ENCODE measurements at regions of chr1 and their contacts with region 1.

Region 1: DNA sequence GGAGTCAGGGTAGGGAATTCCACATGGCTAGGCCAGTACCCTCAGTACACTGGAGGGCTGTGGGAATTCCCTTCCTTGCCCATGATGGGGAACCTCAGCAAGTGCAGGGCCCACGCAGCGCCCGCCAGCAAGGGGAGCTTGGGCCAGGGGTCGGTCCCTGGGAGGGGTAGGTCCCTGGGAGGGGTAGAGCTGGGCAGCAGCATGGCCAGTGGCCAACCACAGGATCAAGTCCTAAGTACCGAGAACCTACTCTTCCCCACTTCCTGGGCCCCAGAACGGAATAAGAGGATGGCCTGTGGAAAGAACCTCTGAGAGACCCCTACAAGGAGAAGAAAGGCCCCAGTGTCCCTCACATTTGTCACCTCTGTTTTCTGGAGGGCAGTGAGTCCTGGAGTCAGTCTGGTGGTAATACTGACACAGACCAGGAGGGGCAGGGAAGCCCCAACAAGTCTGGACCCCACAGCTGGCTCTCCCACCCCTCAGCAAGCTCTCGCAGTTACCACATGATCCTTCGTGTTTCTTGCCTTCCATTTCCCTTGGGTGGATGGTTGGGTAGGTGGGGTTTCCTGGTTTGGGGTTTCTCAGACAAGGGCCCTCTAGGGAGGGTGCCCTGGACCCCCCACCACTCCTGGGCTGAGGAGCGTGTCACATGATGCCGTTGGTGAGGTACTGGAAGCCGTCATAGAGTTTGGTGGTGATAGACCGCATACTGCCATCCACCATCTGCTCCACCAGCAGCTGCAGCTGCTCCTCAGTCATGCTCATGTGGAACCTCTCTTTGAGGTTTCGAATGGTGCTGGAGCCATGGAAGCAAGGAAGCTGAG is 10.3 kb downstream of the ZNF687 start:
- DNase-seq: no peak
- H3K4me3 ChIP-seq: no peak overlapping the region
- H3K27ac ChIP-seq: no peak overlapping the region
- H3K4me1 ChIP-seq: no peaks in the 10 kb centered on the region
- H3K27me3 ChIP-seq: no peaks in the 10 kb centered on the region
- CTCF ChIP-seq: no peak
- EP300 ChIP-seq: no peak
- POLR2A ChIP-seq: no peak

Region 2: DNA sequence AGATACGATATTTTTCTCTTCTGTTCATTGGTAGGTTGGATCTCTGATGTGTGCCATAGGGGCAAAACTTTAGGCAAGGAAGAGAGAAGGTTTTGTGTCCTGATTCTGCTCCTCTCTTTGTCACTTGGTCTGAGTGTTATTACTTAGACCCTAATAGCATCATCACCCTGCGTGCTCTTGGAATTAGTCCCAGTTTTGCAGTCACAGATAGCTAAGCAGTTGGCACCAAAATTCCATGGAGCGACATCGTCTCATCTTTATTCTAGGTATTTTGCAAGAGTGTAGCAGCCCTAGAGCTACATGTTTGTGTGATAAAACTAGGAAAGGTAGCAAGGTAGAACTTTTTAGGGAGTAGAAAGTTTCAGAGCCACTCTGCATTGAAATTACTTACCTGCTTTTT is 70.3 kb before region 1 on chr1:
- intact Hi-C with region 1: no loop called
- DNase-seq: no peak
- H3K4me3 ChIP-seq: no peak overlapping the region
- H3K27ac ChIP-seq: no peak overlapping the region
- H3K4me1 ChIP-seq: no peaks in the 10 kb centered on the region
- H3K27me3 ChIP-seq: no peaks in the 10 kb centered on the region
- CTCF ChIP-seq: no peak
- EP300 ChIP-seq: no peak
- POLR2A ChIP-seq: no peak

Region 3: GRCh38 chr1:151340870-151341754 is 48.7 kb after region 1 on chr1:
- intact Hi-C with region 1: loop called in 1 of 4 experiments (anchors 5 kb)
- DNase-seq: peak in 3 of 5 donors; percentile 33 to 61 (median 39)
- H3K4me3 ChIP-seq: no peak overlapping the region
- H3K27ac ChIP-seq: no peak overlapping the region
- H3K4me1 ChIP-seq: peaks cover 2% of the 10 kb centered on the region
- H3K27me3 ChIP-seq: no peaks in the 10 kb centered on the region
- CTCF ChIP-seq: peak; percentile 66 to 92 (median 81)
- EP300 ChIP-seq: no peak
- POLR2A ChIP-seq: no peak

Region 4: GRCh38 chr1:151399890-151400495 is 107.6 kb after region 1 on chr1:
- intact Hi-C with region 1: loop called in 1 of 4 experiments (anchors 10 kb)
- DNase-seq: peak in 3 of 5 donors; percentile 25 to 51 (median 32)
- H3K4me3 ChIP-seq: peak overlapping the region; percentile 88
- H3K27ac ChIP-seq: peak overlapping the region; percentile 58 to 81
- H3K4me1 ChIP-seq: peaks cover 4% of the 10 kb centered on the region
- H3K27me3 ChIP-seq: no peaks in the 10 kb centered on the region
- CTCF ChIP-seq: no peak
- EP300 ChIP-seq: no peak
- POLR2A ChIP-seq: no peak